Common myeloid progenitor, CD34-positive (primary cell): ENCODE measurements at regions of chr1 and their contacts with region 1.

Region 1: DNA sequence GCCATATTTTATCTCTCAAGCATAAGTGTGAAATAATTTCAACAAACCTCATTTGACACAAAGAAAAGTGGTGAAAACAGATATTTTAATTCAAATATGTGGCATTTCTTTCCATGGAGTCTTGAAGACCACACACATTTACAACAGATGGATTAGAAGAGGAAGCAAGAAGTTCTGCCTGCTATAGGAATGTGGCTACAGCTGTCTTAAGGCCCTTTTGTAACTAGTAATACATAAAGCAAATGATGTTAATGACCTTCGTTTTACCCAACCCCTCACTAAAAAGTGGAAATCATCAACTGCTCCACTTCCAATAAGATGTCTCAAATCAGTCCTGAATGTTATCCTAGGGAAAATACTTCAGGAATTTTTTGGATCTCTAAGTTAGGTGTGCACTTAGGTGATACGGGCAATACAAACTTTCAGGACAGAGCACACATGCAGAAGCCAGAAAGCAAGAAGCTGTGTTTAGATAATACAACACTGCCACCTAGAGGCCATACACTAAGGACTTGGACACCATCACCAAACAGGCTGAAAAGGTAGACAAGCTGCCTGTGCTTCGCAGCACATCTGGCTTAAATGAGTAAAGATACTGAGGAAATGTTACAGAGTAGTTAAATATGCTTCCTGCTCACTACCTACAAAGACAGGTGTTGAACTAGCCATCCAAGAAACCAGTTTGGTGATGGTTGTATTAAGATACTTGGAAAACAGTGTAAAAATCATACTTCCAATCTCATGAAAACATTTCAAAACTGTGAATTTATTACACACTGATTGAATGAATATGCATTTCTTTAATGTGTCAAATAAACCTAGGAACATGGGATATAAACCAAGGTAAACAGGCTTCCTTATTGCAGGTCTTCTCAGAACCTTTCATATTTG is 24.4 kb downstream of the RRAGC start:
- DNase-seq: peak; percentile 87 to 93 (median 91)
- H3K4me3 ChIP-seq: peak overlapping the region in 1 of 7 experiments; percentile 56
- H3K27ac ChIP-seq: no peak overlapping the region
- H3K4me1 ChIP-seq: peaks cover 19 to 28% (median 25%) of the 10 kb centered on the region in 4 experiments
- H3K27me3 ChIP-seq: peaks cover 0 to 3% (median 0%) of the 10 kb centered on the region in 5 experiments

Region 2: GRCh38 chr1:38818175-38818976 is 16.8 kb before region 1 on chr1:
- CTCF ChIA-PET with region 1: interaction called, 40 read pairs
- POLR2A ChIA-PET with region 1: no interaction called
- DNase-seq: peak in 2 of 3 donors; percentile 40 to 47
- H3K4me3 ChIP-seq: peak overlapping the region; percentile 15 to 71 (median 44)
- H3K27ac ChIP-seq: no peak overlapping the region
- H3K4me1 ChIP-seq: peaks cover 3 to 31% (median 26%) of the 10 kb centered on the region in 4 experiments
- H3K27me3 ChIP-seq: peaks cover 6 to 73% (median 32%) of the 10 kb centered on the region in 5 experiments